Posterior vena cava (tissue), 2 donors: ENCODE measurements at regions of chr12 and their contacts with region 1.

Region 1: DNA sequence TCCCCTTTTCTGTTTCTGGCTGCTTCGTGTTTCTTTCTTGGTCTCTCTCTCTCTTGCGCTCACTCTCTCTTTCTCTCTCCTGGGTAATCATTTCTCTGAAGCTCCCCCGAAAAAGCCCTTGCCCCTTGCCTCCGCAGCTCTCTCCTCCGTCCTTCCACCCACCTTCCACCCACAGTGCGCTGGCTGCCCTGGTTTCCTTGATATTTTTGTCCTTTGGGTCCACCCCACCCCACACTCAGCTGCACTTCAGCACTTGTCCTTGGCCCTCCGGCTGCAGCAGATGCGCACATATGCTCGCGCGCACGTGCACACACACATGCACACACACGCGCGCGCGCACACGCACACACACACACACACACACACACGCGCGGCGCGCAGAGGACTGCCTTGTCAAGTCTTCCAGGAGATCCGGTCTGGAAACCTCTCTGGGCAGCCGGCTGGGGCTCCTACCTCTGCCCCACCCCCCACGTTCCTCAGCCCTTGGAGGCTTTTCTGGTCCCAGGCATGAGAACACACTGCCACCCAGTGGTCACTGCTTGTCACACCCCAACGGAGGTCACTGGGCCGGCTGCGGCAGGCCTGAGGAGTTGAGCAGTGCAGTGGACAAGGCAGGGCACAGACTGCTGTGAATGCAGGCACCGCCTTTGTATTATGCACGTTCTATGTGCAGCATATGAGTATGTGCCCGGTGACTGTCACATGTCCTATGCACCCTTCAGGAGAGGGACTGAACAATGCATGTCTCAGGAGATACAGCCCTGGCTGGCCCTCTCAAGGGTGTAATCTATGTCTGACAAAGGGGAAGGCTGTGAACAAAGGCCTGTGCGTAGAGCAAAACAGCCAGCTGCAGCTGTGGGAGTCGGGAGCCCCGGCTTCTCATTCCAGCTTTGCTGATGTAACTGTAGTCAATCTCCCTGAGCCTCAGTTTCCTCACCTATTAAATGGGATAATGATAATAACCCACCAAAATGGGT is 6.5 kb downstream of the LAG3 start:
- DNase-seq: peak; percentile 98

Region 2: GRCh38 chr12:6620137-6620884 is 158.6 kb before region 1 on chr12:
- intact Hi-C with region 1: loop called in 1 of 2 experiments (anchors 5 kb)
- DNase-seq: peak; percentile 87

Region 3: GRCh38 chr12:6735448-6736191 is 43.2 kb before region 1 on chr12:
- intact Hi-C with region 1: loop called in 1 of 2 experiments (anchors 5 kb)
- DNase-seq: peak; percentile 84

Region 4: GRCh38 chr12:6752921-6753771 is 25.7 kb before region 1 on chr12 and contains the start of gene MLF2:
- intact Hi-C with region 1: loop called in 1 of 2 experiments (anchors 2 kb)
- DNase-seq: peak; percentile 99
- total RNA-seq, gene MLF2: 106 to 145 TPM

Region 5: GRCh38 chr12:6825398-6826124 is 46.7 kb after region 1 on chr12:
- intact Hi-C with region 1: no loop called
- DNase-seq: peak; percentile 95